GM12878 (cell line): ENCODE measurements at regions of chr2 and their contacts with region 1.

Region 1: DNA sequence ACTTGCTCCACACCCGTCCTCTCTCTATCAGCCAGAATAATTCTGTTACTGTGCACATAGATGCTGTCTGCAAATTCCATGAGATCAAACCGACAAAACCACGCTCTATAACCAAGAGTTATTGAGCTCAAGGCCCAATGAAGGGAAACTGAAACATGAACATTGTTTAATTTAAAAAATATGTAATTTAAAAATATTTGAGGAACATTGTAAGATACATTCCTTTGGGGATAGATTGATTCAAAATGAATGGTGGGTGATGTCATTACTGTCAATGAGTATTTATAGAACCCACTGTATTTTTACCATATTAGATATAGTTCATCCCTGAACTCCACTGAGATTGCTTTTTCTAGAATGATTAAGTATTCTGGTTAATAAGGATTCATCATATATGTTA is 50.4 kb downstream of the NCKAP5 start:
- DNase-seq: no peak
- ATAC-seq: no peak
- H3K4me3 ChIP-seq: no peak overlapping the region
- H3K27ac ChIP-seq: no peak overlapping the region
- H3K4me1 ChIP-seq: no peaks in the 10 kb centered on the region
- H3K27me3 ChIP-seq: no peaks in the 10 kb centered on the region
- CTCF ChIP-seq: no peak
- EP300 ChIP-seq: no peak
- POLR2A ChIP-seq: no peak
- RAD21 ChIP-seq: no peak

Region 2: DNA sequence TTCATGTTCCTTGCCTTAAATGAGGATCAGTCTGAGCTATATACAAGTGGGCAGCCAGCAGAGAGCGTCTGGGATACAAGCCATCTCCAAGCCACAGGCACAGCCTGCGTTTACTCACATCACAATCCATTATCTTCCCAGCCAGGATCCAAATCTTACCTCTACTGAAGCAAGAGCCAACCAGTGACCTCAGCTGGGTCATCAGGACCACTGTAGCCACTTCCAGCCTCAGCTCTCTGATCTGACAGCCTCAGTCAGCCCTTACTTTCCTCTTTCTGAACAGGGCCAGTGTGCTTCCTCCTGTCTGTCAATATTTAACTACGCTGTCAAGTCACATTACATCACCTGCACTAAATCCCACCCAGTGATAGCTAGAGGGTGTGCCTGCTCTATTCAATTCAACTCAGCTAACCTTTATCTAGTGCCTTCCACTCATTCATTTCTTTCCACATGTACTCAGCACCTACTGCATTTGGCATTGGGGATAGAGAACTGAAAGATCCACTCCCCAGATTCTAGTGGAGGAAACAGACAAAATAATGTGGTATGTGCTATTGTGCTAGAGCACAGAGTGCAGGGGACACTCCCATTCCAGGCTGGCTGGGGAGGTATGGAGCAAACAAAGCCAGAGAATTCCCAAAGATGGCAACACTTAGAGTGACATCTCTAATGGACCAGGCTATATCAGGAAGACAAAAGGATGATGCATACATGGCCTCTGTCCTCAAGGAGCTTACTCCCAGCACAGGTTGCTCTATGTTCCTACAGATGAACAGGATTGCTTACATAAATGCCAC is 96.2 kb before region 1 on chr2:
- CTCF ChIA-PET with region 1: interaction called, 24 read pairs
- POLR2A ChIA-PET with region 1: no interaction called
- RAD21 ChIA-PET with region 1: interaction called, 7 read pairs
- SMC1A ChIA-PET with region 1: interaction called, 7 read pairs
- in situ Hi-C with region 1: no loop called
- intact Hi-C with region 1: no loop called
- DNase-seq: peak; percentile 61
- ATAC-seq: peak; percentile 92
- H3K4me3 ChIP-seq: no peak overlapping the region
- H3K27ac ChIP-seq: no peak overlapping the region
- H3K4me1 ChIP-seq: no peaks in the 10 kb centered on the region
- H3K27me3 ChIP-seq: peaks cover 0 to 4% of the 10 kb centered on the region in 2 experiments; a peak in 1 of 4 replicates
- CTCF ChIP-seq: peak in 1 of 3 experiments; percentile 16; a peak in 1 of 6 replicates
- EP300 ChIP-seq: no peak
- POLR2A ChIP-seq: no peak
- RAD21 ChIP-seq: no peak

Region 3: GRCh38 chr2:133434962-133435668 is 82.8 kb before region 1 on chr2:
- CTCF ChIA-PET with region 1: no interaction called
- POLR2A ChIA-PET with region 1: no interaction called
- RAD21 ChIA-PET with region 1: no interaction called
- SMC1A ChIA-PET with region 1: no interaction called
- in situ Hi-C with region 1: no loop called
- intact Hi-C with region 1: no loop called
- DNase-seq: no peak
- ATAC-seq: 0 out of 3 replicates have a peak, but pooled peaks have one; percentile 27
- H3K4me3 ChIP-seq: no peak overlapping the region
- H3K27ac ChIP-seq: no peak overlapping the region
- H3K4me1 ChIP-seq: no peaks in the 10 kb centered on the region
- H3K27me3 ChIP-seq: no peaks in the 10 kb centered on the region
- CTCF ChIP-seq: no peak
- EP300 ChIP-seq: no peak
- POLR2A ChIP-seq: no peak
- RAD21 ChIP-seq: no peak

Region 4: DNA sequence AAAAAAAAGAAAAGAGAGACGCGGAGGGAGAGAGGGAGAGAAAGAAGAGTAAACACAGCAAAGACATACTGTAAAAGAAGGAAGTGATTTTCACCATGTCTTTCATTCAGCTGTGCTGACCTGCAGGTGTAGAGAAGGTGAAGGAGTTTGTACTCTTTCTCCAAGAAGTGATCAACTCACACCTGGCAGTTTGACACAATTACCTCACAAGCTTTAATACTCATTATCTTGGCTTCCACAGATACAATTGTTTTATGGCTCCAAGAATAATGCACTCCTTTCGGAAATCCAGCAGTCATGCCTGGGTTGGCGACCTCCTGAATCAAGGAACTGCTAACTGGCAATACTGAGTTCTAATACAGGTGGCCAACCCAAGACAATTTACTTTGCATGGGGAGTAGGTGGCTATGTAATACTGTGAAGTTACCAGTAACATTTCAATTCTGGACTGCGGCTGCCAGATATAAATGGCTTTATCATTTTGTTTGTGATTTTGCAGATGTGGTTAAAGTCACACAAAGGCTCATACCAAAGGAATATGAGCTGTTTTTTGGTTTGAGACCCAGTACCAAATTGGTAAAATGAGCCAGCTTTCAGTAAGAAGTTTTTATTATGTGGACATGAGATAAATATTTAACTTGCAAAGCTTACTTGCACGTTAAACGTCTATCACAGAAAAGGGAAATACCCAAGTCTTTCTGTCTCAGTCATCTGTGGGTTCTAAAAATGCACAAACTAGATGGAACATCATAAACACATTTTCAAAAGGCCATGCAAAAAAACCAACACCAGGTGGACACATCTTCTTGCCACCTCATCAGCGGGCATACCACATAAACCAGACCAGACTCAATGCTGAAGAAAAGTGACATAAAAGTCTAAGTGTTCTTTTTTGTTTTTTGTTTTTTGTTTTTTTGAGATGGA is 19.0 kb before region 1 on chr2:
- CTCF ChIA-PET with region 1: interaction called, 31 read pairs
- POLR2A ChIA-PET with region 1: interaction called, 18 read pairs
- RAD21 ChIA-PET with region 1: interaction called, 18 read pairs
- SMC1A ChIA-PET with region 1: interaction called, 81 read pairs
- in situ Hi-C with region 1: no loop called
- intact Hi-C with region 1: no loop called
- DNase-seq: peak; percentile 72
- ATAC-seq: peak; percentile 75
- H3K4me3 ChIP-seq: no peak overlapping the region
- H3K27ac ChIP-seq: no peak overlapping the region
- H3K4me1 ChIP-seq: no peaks in the 10 kb centered on the region
- H3K27me3 ChIP-seq: no peaks in the 10 kb centered on the region
- CTCF ChIP-seq: peak in 1 of 3 experiments; percentile 22; a peak in 1 of 6 replicates
- EP300 ChIP-seq: peak; percentile 72 to 81; a peak in 2 of 4 replicates
- POLR2A ChIP-seq: no peak
- RAD21 ChIP-seq: no peak

Region 5: GRCh38 chr2:133504566-133505393 is 13.1 kb before region 1 on chr2:
- CTCF ChIA-PET with region 1: interaction called, 31 read pairs
- POLR2A ChIA-PET with region 1: interaction called, 18 read pairs
- RAD21 ChIA-PET with region 1: interaction called, 18 read pairs
- SMC1A ChIA-PET with region 1: interaction called, 81 read pairs
- in situ Hi-C with region 1: no loop called
- intact Hi-C with region 1: no loop called
- DNase-seq: no peak
- ATAC-seq: no peak
- H3K4me3 ChIP-seq: no peak overlapping the region
- H3K27ac ChIP-seq: no peak overlapping the region
- H3K4me1 ChIP-seq: no peaks in the 10 kb centered on the region
- H3K27me3 ChIP-seq: no peaks in the 10 kb centered on the region
- CTCF ChIP-seq: no peak
- EP300 ChIP-seq: no peak
- POLR2A ChIP-seq: no peak
- RAD21 ChIP-seq: no peak

Region 6: GRCh38 chr2:133624551-133624950 is 106.7 kb after region 1 on chr2:
- CTCF ChIA-PET with region 1: no interaction called
- POLR2A ChIA-PET with region 1: no interaction called
- RAD21 ChIA-PET with region 1: no interaction called
- SMC1A ChIA-PET with region 1: no interaction called
- in situ Hi-C with region 1: no loop called
- intact Hi-C with region 1: no loop called
- DNase-seq: no peak
- ATAC-seq: no peak
- H3K4me3 ChIP-seq: no peak overlapping the region
- H3K27ac ChIP-seq: no peak overlapping the region
- H3K4me1 ChIP-seq: no peaks in the 10 kb centered on the region
- H3K27me3 ChIP-seq: no peaks in the 10 kb centered on the region
- CTCF ChIP-seq: no peak
- EP300 ChIP-seq: no peak
- POLR2A ChIP-seq: no peak
- RAD21 ChIP-seq: no peak

Region 7: GRCh38 chr2:133780099-133780839 is 262.4 kb after region 1 on chr2:
- CTCF ChIA-PET with region 1: interaction called, 8 read pairs
- POLR2A ChIA-PET with region 1: no interaction called
- RAD21 ChIA-PET with region 1: no interaction called
- SMC1A ChIA-PET with region 1: interaction called, 3 read pairs
- in situ Hi-C with region 1: no loop called
- intact Hi-C with region 1: loop called (anchors 1 kb)
- DNase-seq: peak; percentile 1
- ATAC-seq: peak; percentile 74
- H3K4me3 ChIP-seq: no peak overlapping the region
- H3K27ac ChIP-seq: no peak overlapping the region
- H3K4me1 ChIP-seq: no peaks in the 10 kb centered on the region
- H3K27me3 ChIP-seq: 0 out of 4 replicates have a peak, but pooled peaks cover 0 to 3% of the 10 kb centered on the region in 2 experiments
- CTCF ChIP-seq: peak; percentile 70 to 72 (median 71)
- EP300 ChIP-seq: no peak
- POLR2A ChIP-seq: no peak
- RAD21 ChIP-seq: peak; percentile 66

Region 8: DNA sequence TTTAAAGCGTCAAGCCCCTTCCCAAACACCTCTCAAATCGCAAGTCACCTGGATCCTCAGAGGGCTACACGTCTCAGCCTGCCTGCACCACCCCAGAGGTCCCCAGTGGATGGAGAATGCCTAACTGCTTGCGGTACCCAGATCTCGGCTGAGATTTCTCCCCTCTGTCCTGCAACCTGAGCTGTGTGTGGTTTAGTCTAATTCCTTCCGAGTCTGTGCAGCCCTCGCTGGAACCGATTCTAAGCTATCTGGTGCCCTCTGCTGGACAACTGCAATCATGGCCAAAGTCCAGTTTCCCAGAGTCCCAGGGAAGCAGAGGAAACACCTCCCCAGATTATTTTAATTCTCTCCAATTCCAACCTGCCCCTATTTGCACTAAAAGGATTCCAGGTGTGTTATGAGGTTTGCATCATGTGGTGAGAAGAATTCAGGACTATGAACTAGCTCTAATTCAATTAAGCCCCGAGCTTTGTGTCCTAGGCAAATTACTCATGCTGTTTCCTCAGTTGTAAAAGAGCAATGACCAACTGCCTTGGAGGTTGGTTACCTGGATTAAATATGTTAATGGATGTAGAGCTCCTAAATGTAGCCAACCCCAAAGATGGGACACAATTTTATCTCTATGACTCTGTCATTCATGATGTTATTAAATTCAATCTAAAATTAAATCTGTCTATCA is 326.5 kb after region 1 on chr2:
- CTCF ChIA-PET with region 1: interaction called, 14 read pairs
- POLR2A ChIA-PET with region 1: no interaction called
- RAD21 ChIA-PET with region 1: interaction called, 12 read pairs
- SMC1A ChIA-PET with region 1: no interaction called
- in situ Hi-C with region 1: no loop called
- intact Hi-C with region 1: no loop called
- DNase-seq: peak; percentile 5
- ATAC-seq: peak; percentile 94
- H3K4me3 ChIP-seq: no peak overlapping the region
- H3K27ac ChIP-seq: no peak overlapping the region
- H3K4me1 ChIP-seq: no peaks in the 10 kb centered on the region
- H3K27me3 ChIP-seq: no peaks in the 10 kb centered on the region; a peak in 1 of 4 replicates
- CTCF ChIP-seq: peak; percentile 84 to 91 (median 84)
- EP300 ChIP-seq: no peak
- POLR2A ChIP-seq: no peak
- RAD21 ChIP-seq: peak; percentile 87